Activated B cell treated with CpG ODN at 0.5 μM for 24 hours (primary cell): ENCODE measurements at regions of chr2 and their contacts with region 1.

Region 1: GRCh38 chr2:24971536-24972314 is at the start of gene DNAJC27:
- DNase-seq: peak; percentile 96
- ATAC-seq: peak; percentile 90
- H3K4me3 Mint-ChIP-seq: peak within 1 kb of the TSS; percentile 96
- H3K27ac Mint-ChIP-seq: peak within 1 kb of the TSS; percentile 100
- H3K4me1 Mint-ChIP-seq: peaks cover 21% of the 10 kb centered on the region
- H3K27me3 Mint-ChIP-seq: no peaks in the 10 kb centered on the region
- CTCF ChIP-seq: no peak
- total RNA-seq, gene DNAJC27: 9.0 and 9.7 TPM in 2 replicates

Region 2: GRCh38 chr2:24792874-24793760 is 178.6 kb before region 1 on chr2 and contains the starts of genes CENPO and PTRHD1:
- CTCF ChIA-PET with region 1: no interaction called
- POLR2A ChIA-PET with region 1: interaction called, 5 read pairs
- intact Hi-C with region 1: loop called (anchors 1 kb)
- DNase-seq: peak; percentile 94
- ATAC-seq: peak; percentile 98
- H3K4me3 Mint-ChIP-seq: peak within 1 kb of the TSS; percentile 98
- H3K27ac Mint-ChIP-seq: peak within 1 kb of the TSS; percentile 100
- H3K4me1 Mint-ChIP-seq: peaks cover 18% of the 10 kb centered on the region
- H3K27me3 Mint-ChIP-seq: no peaks in the 10 kb centered on the region
- CTCF ChIP-seq: no peak
- total RNA-seq, gene CENPO: 11.2 and 13.4 TPM in 2 replicates
- total RNA-seq, gene PTRHD1: 39.6 and 41.1 TPM in 2 replicates

Region 3: DNA sequence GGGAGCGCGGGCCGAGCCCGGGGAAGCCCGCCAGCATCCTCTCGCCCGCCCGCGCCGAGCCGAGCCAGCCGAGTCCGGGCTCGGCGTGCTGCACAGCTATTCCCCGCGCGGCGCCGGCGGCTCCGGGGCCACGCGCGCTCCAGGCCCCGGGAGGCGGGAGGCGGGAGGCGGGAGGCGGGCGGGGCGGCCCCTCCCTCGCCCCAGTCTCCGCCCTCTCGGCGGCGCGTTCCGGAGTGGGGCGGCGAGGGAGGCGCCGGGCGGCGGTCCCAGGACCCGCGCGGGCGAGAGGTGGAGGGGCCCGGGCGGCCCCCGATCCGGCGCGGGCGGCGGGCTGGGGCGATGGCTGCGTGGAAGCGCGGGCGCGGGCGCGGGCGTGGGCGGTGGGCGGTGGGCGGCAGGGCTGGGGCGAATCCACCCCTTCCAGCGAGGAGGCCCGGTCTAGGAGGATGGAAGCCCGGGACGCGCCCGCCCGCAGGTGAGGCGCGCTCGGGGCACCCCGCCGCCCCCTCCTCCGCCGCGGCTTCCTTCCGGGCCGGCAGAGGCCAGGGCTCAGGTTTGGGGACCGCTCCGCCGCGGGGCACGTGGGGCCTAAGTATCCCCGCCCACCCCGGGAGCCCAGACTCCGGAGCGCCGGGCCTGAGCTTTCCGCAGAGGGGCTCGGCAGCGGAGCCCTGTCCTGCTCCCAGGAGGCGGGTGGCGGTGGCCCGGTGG is 51.5 kb before region 1 on chr2 and contains the start of gene ADCY3:
- CTCF ChIA-PET with region 1: no interaction called
- POLR2A ChIA-PET with region 1: interaction called, 6 read pairs
- intact Hi-C with region 1: loop called (anchors 1 kb)
- DNase-seq: peak; percentile 62
- ATAC-seq: peak; percentile 79
- H3K4me3 Mint-ChIP-seq: peak within 1 kb of the TSS; percentile 88
- H3K27ac Mint-ChIP-seq: peak within 1 kb of the TSS; percentile 82
- H3K4me1 Mint-ChIP-seq: peaks cover 24% of the 10 kb centered on the region
- H3K27me3 Mint-ChIP-seq: no peaks in the 10 kb centered on the region
- CTCF ChIP-seq: no peak
- total RNA-seq, gene ADCY3: 99.9 and 126 TPM in 2 replicates

Region 4: DNA sequence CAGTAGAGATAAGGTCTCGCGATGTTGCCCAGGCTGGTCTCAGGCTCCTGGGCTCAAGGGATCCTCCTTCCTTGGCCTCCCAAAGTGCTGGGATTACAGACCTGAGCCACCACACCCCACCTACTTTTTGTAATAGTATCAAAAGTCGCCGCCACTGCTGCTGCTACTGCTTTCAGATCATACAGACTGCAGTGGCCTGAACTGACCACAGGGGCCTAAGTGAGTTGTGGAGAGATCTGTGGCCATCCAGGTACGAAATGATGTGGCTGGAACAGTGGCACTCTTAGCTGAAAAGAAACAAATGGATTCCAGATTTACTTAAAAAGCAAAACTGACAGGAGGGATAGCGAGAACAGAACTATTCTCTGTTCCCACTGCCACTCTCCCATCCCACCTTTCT is 229.5 kb after region 1 on chr2:
- CTCF ChIA-PET with region 1: no interaction called
- POLR2A ChIA-PET with region 1: no interaction called
- intact Hi-C with region 1: loop called (anchors 1 kb)
- DNase-seq: no peak
- ATAC-seq: no peak
- H3K4me3 Mint-ChIP-seq: no peak overlapping the region
- H3K27ac Mint-ChIP-seq: no peak overlapping the region
- H3K4me1 Mint-ChIP-seq: peaks cover 24% of the 10 kb centered on the region
- H3K27me3 Mint-ChIP-seq: no peaks in the 10 kb centered on the region
- CTCF ChIP-seq: no peak

Region 5: DNA sequence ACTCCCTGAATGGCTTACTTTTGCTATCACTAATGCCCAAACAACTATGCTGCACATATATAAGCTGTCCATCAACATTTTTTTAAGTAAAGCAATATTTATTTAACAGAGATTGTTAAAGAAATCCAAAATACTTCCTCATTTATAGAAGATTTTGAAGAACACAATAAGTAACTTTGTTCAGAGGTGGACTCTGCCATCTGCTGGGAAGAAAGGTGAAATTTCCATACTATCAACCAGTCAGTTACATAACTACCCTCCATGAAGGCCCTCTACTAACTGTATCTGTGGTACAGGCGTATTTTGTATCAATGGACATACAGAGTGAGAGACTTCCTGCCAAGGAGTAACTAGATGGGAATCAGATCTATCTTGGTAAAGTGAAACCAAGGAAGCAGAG is 595.7 kb after region 1 on chr2:
- CTCF ChIA-PET with region 1: interaction called, 5 read pairs
- POLR2A ChIA-PET with region 1: no interaction called
- intact Hi-C with region 1: loop called (anchors 2 kb)
- DNase-seq: no peak
- ATAC-seq: peak; percentile 53
- H3K4me3 Mint-ChIP-seq: no peak overlapping the region
- H3K27ac Mint-ChIP-seq: no peak overlapping the region
- H3K4me1 Mint-ChIP-seq: peaks cover 27% of the 10 kb centered on the region
- H3K27me3 Mint-ChIP-seq: no peaks in the 10 kb centered on the region
- CTCF ChIP-seq: no peak

Region 6: GRCh38 chr2:25878361-25879132 is 906.8 kb after region 1 on chr2 and contains the start of gene ASXL2:
- CTCF ChIA-PET with region 1: no interaction called
- POLR2A ChIA-PET with region 1: no interaction called
- intact Hi-C with region 1: loop called (anchors 5 kb)
- DNase-seq: peak; percentile 98
- ATAC-seq: peak; percentile 88
- H3K4me3 Mint-ChIP-seq: peak within 1 kb of the TSS; percentile 98
- H3K27ac Mint-ChIP-seq: peak within 1 kb of the TSS; percentile 100
- H3K4me1 Mint-ChIP-seq: peaks cover 24% of the 10 kb centered on the region
- H3K27me3 Mint-ChIP-seq: peaks cover 2% of the 10 kb centered on the region
- CTCF ChIP-seq: no peak
- total RNA-seq, gene ASXL2: 38.4 and 41.9 TPM in 2 replicates